Activated CD4-positive, alpha-beta T cell treated with anti-CD3 and anti-CD28 coated beads for 36 hours (primary cell): ENCODE measurements at regions of chr13 and their contacts with region 1.

Region 1: GRCh38 chr13:52194184-52194868 is 34.9 kb upstream of the NEK3 start:
- DNase-seq: peak; percentile 92
- ATAC-seq: peak; percentile 83
- H3K4me3 Mint-ChIP-seq: peak overlapping the region; percentile 86
- H3K27ac Mint-ChIP-seq: peak overlapping the region; percentile 100
- H3K4me1 Mint-ChIP-seq: peaks cover 32% of the 10 kb centered on the region
- H3K27me3 Mint-ChIP-seq: no peaks in the 10 kb centered on the region

Region 2: GRCh38 chr13:51729866-51730546 is 464.3 kb before region 1 on chr13:
- CTCF ChIA-PET with region 1: no interaction called
- POLR2A ChIA-PET with region 1: no interaction called
- intact Hi-C with region 1: no loop called
- DNase-seq: peak; percentile 75
- ATAC-seq: peak; percentile 89
- H3K4me3 Mint-ChIP-seq: no peak overlapping the region
- H3K27ac Mint-ChIP-seq: no peak overlapping the region
- H3K4me1 Mint-ChIP-seq: peaks cover 3% of the 10 kb centered on the region
- H3K27me3 Mint-ChIP-seq: no peaks in the 10 kb centered on the region

Region 3: DNA sequence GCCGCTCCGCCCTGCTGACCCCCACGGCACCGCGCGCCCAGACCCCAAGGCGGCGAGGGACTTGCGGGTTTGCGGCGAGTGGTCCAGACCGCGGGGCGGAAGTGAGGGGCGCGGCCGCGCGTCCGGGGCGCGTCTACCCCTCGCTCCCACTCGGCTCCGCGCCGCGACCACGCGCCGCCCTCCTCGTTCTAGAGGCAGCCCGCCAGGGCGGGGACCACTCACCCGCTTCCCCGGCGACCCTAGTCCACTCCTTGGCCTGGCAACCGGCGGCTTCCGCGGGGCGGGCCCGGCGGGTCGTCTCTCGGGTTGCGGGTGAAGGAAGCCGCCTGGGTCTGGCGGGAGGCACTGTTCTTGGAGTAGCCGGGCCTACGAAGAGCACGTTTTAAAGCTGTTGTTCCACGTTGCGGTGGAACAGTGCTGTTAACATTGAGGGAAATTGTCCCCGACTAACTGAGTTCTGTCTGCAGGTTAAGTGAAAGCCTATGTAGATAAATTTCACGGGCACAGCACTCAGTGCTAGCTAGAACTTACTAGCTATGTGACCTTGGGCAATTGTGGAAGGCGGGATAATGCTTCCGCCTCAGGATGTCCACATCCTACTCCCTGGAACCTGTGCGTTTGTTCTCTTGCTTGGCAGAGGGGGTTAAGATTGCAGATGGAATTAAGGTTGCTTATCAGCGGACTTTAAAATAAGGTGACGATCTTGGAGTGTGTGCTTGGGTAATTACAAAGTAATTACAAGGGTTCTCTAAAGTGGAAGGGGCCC is 34.8 kb before region 1 on chr13 and contains the start of gene NEK3:
- CTCF ChIA-PET with region 1: no interaction called
- POLR2A ChIA-PET with region 1: no interaction called
- intact Hi-C with region 1: loop called in 1 of 2 experiments (anchors 1 kb)
- DNase-seq: peak; percentile 77
- ATAC-seq: peak; percentile 80
- H3K4me3 Mint-ChIP-seq: peak within 1 kb of the TSS; percentile 78
- H3K27ac Mint-ChIP-seq: peak within 1 kb of the TSS; percentile 85
- H3K4me1 Mint-ChIP-seq: peaks cover 30% of the 10 kb centered on the region
- H3K27me3 Mint-ChIP-seq: no peaks in the 10 kb centered on the region
- total RNA-seq, gene NEK3: 10.5 to 12.0 TPM

Region 4: GRCh38 chr13:52617070-52618060 is 423.0 kb after region 1 on chr13:
- CTCF ChIA-PET with region 1: no interaction called
- POLR2A ChIA-PET with region 1: interaction called, 4 read pairs
- intact Hi-C with region 1: loop called in 1 of 2 experiments (anchors 10 kb)
- DNase-seq: peak; percentile 91
- ATAC-seq: peak; percentile 96
- H3K4me3 Mint-ChIP-seq: peak overlapping the region; percentile 95
- H3K27ac Mint-ChIP-seq: peak overlapping the region; percentile 94
- H3K4me1 Mint-ChIP-seq: peaks cover 33% of the 10 kb centered on the region
- H3K27me3 Mint-ChIP-seq: no peaks in the 10 kb centered on the region